Ascending aorta (tissue), 2 donors: ENCODE measurements at regions of chr14 and their contacts with region 1.

Region 1: GRCh38 chr14:50773632-50774541 is 57.1 kb downstream of the NIN start:
- DNase-seq: peak in 1 of 2 donors; percentile 74
- H3K4me3 ChIP-seq: no peak overlapping the region
- H3K27ac ChIP-seq: peak overlapping the region; percentile 76 to 77
- H3K4me1 ChIP-seq: peaks cover 9 to 30% of the 10 kb centered on the region in 2 donors
- H3K27me3 ChIP-seq: no peaks in the 10 kb centered on the region
- CTCF ChIP-seq: peak; percentile 53 to 83 (median 78)

Region 2: GRCh38 chr14:50321009-50321660 is 452.8 kb before region 1 on chr14:
- intact Hi-C with region 1: loop called (anchors 5 kb)
- DNase-seq: peak in 1 of 2 donors; percentile 80
- H3K4me3 ChIP-seq: peak overlapping the region in 1 of 2 donors; percentile 57
- H3K27ac ChIP-seq: peak overlapping the region; percentile 75 to 84
- H3K4me1 ChIP-seq: peaks cover 0 to 4% of the 10 kb centered on the region in 2 donors
- H3K27me3 ChIP-seq: no peaks in the 10 kb centered on the region
- CTCF ChIP-seq: peak; percentile 78 to 86 (median 83)

Region 3: DNA sequence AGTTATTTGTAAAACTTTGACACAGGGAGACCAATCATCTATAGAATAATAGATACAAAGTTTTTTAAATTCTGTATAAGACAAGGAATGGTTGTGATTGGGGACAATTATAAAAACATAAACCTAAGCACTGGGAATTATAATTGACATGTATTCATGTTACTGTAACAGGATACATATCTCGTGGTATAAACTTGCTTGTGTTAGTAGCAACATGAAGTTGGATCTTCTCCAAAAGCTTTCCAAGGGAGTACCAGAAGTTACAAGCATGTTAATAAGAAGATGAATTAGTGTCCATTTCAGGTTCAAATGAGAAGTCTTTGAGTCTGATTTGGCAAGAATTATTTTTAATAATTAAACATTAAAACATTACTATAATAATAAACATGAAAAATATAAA is 419.4 kb before region 1 on chr14:
- intact Hi-C with region 1: no loop called
- DNase-seq: no peak
- H3K4me3 ChIP-seq: no peak overlapping the region
- H3K27ac ChIP-seq: no peak overlapping the region
- H3K4me1 ChIP-seq: no peaks in the 10 kb centered on the region
- H3K27me3 ChIP-seq: no peaks in the 10 kb centered on the region
- CTCF ChIP-seq: no peak

Region 4: GRCh38 chr14:50667996-50668825 is 105.7 kb before region 1 on chr14 and contains the start of gene SAV1:
- intact Hi-C with region 1: loop called (anchors 2 kb)
- DNase-seq: peak in 1 of 2 donors; percentile 89
- H3K4me3 ChIP-seq: peak within 1 kb of the TSS; percentile 86 to 96
- H3K27ac ChIP-seq: peak within 1 kb of the TSS; percentile 99
- H3K4me1 ChIP-seq: peaks cover 4 to 15% of the 10 kb centered on the region in 2 donors
- H3K27me3 ChIP-seq: no peaks in the 10 kb centered on the region
- CTCF ChIP-seq: no peak
- total RNA-seq, gene SAV1: 61.7 TPM

Region 5: DNA sequence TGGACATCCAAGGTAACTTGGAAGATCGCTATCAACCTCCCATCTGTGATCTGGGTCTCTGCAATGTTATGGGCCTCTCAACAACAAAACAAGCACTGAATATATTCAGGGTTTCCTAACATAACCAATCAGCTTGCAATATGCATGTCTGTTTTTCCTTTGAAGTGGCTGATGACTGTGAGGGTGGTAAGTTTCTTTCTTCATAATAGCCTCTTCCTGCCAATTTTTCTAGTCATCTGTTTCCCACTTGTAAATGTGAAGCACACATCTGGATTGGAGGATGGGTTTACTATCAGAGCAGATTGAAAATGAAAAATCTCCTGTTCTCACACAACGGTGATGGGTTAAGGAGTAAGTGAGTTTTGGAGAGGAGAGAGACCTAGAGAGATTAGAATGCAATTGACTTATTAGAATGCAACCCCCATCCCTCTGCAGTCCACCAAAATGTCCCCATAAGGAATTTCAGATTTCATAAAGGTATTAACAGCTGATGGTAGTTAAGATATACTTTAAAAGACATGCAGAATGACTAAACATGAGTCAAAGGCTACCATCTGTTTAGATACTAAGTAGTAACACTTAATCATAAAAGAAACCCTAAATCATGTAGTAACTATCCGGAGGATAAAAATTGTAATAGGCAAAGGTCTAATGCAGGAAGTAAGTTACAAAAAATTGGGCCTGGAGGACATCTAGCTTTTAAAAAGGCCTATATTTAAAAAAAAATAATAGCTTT is 47.3 kb before region 1 on chr14:
- intact Hi-C with region 1: no loop called
- DNase-seq: no peak
- H3K4me3 ChIP-seq: no peak overlapping the region
- H3K27ac ChIP-seq: no peak overlapping the region
- H3K4me1 ChIP-seq: no peaks in the 10 kb centered on the region
- H3K27me3 ChIP-seq: no peaks in the 10 kb centered on the region
- CTCF ChIP-seq: no peak

Region 6: GRCh38 chr14:50756300-50756699 is 17.6 kb before region 1 on chr14:
- intact Hi-C with region 1: loop called (anchors 1 kb)
- DNase-seq: no peak
- H3K4me3 ChIP-seq: no peak overlapping the region
- H3K27ac ChIP-seq: no peak overlapping the region
- H3K4me1 ChIP-seq: peaks cover 0 to 12% of the 10 kb centered on the region in 2 donors
- H3K27me3 ChIP-seq: no peaks in the 10 kb centered on the region
- CTCF ChIP-seq: no peak

Region 7: DNA sequence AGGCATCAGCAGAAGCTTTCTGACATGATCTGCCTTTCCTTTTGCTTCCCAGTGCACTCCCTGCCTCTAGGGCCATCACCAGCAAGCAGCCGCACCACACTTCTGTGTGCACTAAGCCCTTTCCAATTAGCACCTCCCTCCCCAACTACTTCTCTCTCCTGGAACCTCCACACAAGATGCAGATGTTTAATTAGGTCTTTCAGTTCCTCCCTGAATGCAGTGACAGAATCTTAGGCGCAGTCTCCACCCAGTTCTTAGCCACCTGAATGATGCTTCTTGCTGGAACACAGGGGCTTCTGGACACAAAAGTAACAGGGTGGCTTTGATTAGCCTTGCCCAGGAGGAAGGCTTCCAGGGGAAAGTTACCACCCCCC is 24.1 kb after region 1 on chr14:
- intact Hi-C with region 1: no loop called
- DNase-seq: no peak
- H3K4me3 ChIP-seq: no peak overlapping the region
- H3K27ac ChIP-seq: no peak overlapping the region
- H3K4me1 ChIP-seq: no peaks in the 10 kb centered on the region
- H3K27me3 ChIP-seq: no peaks in the 10 kb centered on the region
- CTCF ChIP-seq: no peak

Region 8: GRCh38 chr14:50943943-50944646 is 170.2 kb after region 1 on chr14 and contains the start of gene PYGL:
- intact Hi-C with region 1: loop called (anchors 10 kb)
- DNase-seq: peak in 1 of 2 donors; percentile 84
- H3K4me3 ChIP-seq: peak within 1 kb of the TSS; percentile 76 to 84
- H3K27ac ChIP-seq: peak within 1 kb of the TSS; percentile 64 to 84
- H3K4me1 ChIP-seq: no peaks in the 10 kb centered on the region
- H3K27me3 ChIP-seq: no peaks in the 10 kb centered on the region
- CTCF ChIP-seq: no peak
- total RNA-seq, gene PYGL: 13.8 TPM